ENCODE measurements at regions of chr14 and their contacts with region 1.

Region 1: DNA sequence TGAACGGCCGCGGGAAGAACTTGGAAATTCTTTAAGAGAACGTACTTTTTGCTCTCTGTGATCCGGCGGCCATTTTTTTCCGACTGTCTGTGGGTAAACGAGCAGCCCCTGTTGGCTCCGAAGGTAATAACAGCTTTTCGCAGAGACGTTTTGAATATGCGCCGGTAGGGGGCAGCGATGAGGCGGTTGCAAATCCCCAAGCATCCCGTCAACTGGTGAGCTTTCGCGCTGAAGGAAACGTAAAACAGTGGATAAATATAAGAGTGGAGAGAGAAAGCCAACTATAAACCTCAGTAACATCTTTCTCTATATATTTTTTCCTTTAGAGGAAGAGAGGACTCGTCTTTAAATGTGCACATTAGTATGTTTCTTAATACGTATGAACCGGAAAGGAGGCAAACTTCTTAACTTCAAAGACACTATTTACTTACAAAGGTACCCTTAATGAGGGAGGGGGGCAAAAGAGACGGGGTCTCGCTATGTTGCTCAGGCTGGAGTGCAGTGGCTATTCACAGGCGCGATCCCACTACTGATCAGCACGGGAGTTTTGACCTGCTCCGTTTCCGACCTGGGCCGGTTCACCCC is 9.6 kb upstream of the NEMF start:
- DNase-seq: peak; percentile 80
- ATAC-seq: peak; percentile 42
- H3K4me3 Mint-ChIP-seq: no peak overlapping the region
- H3K27ac Mint-ChIP-seq: no peak overlapping the region
- H3K4me1 Mint-ChIP-seq: peaks cover 12% of the 10 kb centered on the region
- H3K27me3 Mint-ChIP-seq: peaks cover 3% of the 10 kb centered on the region; the same call in 1 of the 2 replicates
- CTCF ChIP-seq: peak; percentile 99

Region 2: DNA sequence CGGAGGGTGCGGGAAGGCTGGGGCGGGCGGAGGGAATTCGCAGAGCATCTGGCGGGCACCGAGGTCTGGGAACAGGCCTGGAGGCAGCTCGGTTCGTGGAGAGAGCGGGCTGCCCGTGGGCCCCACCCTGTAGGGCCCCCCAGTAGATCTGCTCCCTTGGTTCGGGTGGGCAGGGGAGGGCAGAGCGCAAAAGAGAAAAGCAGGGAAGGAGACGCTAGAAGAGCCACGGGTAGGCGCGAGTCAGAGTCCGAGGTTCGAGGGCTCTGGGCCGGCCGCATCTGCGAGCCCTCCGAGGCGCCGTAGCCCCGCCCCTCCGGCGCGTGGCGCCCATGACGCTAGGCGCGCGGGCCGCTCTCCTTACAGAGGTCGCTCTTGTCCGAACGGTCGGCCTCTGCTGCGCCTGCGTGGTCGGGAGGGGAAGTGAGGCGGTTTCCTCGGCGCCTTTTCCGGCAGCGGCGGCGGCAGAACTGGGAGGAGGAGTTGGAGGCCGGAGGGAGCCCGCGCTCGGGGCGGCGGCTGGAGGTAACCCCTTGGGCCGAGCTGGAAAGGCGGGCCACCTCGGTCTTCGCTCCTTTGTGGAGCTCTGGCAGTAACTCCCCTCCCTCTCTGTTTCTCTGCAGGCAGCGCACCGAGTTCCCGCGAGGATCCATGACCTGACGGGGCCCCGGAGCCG is 30.6 kb after region 1 on chr14 and contains the start of gene ARF6:
- CTCF ChIA-PET with region 1: interaction called, 6 read pairs
- POLR2A ChIA-PET with region 1: interaction called, 11 read pairs
- DNase-seq: peak; percentile 97
- ATAC-seq: peak; percentile 95
- H3K4me3 Mint-ChIP-seq: peak within 1 kb of the TSS; percentile 96
- H3K27ac Mint-ChIP-seq: peak within 1 kb of the TSS; percentile 100
- H3K4me1 Mint-ChIP-seq: peaks cover 36% of the 10 kb centered on the region
- H3K27me3 Mint-ChIP-seq: no peaks in the 10 kb centered on the region
- CTCF ChIP-seq: no peak
- total RNA-seq, gene ARF6: 50.9 to 55.9 TPM (median 51.9 TPM) in 3 replicates

Region 3: DNA sequence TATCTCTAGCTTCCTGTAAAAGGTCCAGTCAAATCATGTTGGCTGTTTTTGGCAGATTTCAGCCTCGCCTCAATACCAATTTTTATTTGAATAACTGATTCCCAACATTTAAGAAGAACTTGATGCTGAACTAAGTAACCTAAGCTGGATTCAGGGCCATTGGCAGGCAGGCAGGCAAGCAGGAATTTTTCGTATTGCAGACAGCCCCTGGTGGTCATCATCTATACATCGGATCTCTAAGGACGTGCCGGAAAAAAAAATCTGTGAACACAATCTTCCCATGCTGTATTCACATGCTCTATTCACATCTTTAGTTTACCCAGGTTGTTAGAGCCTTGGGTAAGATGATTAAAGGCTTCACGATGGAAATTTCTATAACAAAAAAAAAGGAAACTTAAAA is 247.2 kb after region 1 on chr14:
- CTCF ChIA-PET with region 1: interaction called, 33 read pairs
- POLR2A ChIA-PET with region 1: interaction called, 3 read pairs
- DNase-seq: no peak
- ATAC-seq: 0 out of 2 replicates have a peak, but pooled peaks have one; percentile 11
- H3K4me3 Mint-ChIP-seq: no peak overlapping the region
- H3K27ac Mint-ChIP-seq: no peak overlapping the region
- H3K4me1 Mint-ChIP-seq: peaks cover 24% of the 10 kb centered on the region
- H3K27me3 Mint-ChIP-seq: no peaks in the 10 kb centered on the region
- CTCF ChIP-seq: no peak

Region 4: DNA sequence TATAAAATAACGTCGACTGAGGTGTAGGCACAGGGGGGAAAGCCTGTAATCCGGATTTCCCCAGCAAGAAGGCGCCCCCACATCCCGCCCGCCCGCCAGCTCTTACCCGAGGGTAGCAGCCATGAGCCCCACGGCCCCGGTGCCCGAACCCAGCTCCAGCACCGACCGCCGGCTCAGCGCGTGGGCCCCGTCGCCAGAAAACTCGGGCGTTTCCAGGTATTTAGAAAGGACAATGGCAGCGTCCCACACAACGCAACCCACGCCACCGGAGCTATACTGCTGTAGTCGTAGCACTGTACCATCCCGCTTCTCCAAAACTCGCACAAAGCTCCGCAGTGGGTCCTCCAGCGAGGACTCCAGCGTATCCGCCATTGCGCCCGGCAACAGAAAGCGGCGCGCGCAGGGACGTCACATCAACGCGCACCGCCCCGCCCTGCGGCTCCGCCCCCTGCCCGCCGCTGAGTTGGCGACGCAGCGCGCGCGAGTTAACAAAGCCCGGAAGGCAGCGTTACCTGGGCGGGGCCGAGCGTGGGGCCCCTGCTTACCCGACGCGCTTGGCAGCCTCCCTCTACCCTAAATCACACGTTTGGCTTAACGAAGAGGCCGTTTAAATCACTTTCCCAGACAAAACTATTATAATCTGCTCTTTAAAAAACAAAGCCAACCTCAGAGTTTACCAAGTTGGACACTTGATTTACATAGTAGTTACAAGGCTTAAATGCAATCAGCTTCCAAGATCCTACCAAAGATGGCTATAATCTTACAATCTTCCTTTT is 254.2 kb after region 1 on chr14 and contains the start of gene VCPKMT:
- CTCF ChIA-PET with region 1: interaction called, 11 read pairs
- POLR2A ChIA-PET with region 1: interaction called, 12 read pairs
- DNase-seq: peak; percentile 93
- ATAC-seq: peak; percentile 99
- H3K4me3 Mint-ChIP-seq: peak within 1 kb of the TSS; percentile 94
- H3K27ac Mint-ChIP-seq: peak within 1 kb of the TSS; percentile 98
- H3K4me1 Mint-ChIP-seq: peaks cover 21% of the 10 kb centered on the region
- H3K27me3 Mint-ChIP-seq: no peaks in the 10 kb centered on the region
- CTCF ChIP-seq: no peak
- total RNA-seq, gene VCPKMT: 10.5 to 11.5 TPM (median 11.1 TPM) in 3 replicates

Measured in WTC11 (cell line).